Common myeloid progenitor, CD34-positive (primary cell): ENCODE measurements at regions of chr16 and their contacts with region 1.

Region 1: DNA sequence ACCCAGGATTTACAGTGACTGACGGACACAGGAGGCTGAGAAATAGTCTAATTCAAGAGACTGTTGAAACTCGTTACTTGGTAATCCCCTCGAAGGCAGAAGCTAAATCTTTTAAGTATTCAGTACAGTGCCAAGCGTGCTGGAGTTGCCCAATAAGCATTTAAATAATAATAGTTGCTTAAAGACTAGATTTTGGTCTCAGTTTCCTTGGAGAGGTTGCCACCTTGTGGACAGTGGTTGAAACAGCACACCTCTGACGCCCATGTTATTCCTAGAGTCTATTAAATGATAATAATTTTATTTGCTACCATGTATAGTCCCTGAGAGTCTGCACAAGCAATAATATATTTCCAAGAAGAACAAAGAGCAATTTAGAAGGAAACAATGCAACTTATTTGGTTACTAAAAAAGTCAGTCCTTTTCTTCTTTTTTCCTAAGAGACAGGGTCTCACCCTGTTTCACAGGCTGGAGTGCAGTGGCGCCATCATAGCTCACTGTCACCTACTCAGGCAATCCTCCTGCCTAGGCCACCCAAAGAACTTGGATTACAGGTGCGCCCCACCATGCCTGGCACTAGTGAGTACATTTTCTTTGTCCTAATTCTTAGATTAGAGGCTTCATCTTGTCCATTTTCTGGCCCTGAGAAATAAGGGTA is 138.0 kb upstream of the NUDT7 start:
- DNase-seq: peak; percentile 51 to 75 (median 68)
- H3K4me3 ChIP-seq: no peak overlapping the region
- H3K27ac ChIP-seq: no peak overlapping the region
- H3K4me1 ChIP-seq: peaks cover 0 to 10% (median 4%) of the 10 kb centered on the region in 4 experiments
- H3K27me3 ChIP-seq: peaks cover 0 to 6% (median 5%) of the 10 kb centered on the region in 5 experiments

Region 2: DNA sequence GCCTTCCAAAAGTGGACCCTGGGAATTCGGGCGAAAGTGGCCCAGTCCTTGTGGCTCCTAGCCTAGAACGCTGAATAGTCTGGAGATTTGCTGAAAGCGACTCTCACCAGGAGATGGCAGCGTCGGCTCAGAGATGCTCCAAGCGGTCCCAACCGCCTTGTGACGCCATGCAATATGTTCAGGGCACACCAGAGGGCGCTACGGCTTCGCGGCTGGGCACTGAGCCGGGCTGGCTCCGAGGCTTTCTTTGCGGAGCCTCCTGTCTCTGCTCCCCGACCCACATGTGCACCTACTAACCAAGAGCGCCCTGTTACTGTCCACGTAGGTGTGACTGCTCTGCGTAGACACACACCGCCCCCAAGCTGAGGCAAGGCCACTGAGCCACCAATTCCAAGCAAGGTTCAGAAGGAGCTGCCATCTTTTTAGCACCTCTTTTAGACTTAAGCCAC is 348.2 kb before region 1 on chr16:
- CTCF ChIA-PET with region 1: interaction called, 90 read pairs
- POLR2A ChIA-PET with region 1: interaction called, 10 read pairs
- DNase-seq: peak; percentile 82 to 90 (median 86)
- H3K4me3 ChIP-seq: peak overlapping the region in 3 of 7 experiments; percentile 13 to 42 (median 36)
- H3K27ac ChIP-seq: no peak overlapping the region
- H3K4me1 ChIP-seq: no peaks in the 10 kb centered on the region
- H3K27me3 ChIP-seq: peaks cover 0 to 11% (median 7%) of the 10 kb centered on the region in 5 experiments